ENCODE measurements at regions of chr11 and their contacts with region 1.

Region 1: GRCh38 chr11:111422494-111423249 is 43.6 kb upstream of the POU2AF1 start:
- DNase-seq: peak; percentile 41 to 59 (median 48)
- ATAC-seq: peak; percentile 98
- H3K4me3 ChIP-seq: no peak overlapping the region
- H3K27ac ChIP-seq: no peak overlapping the region
- H3K4me1 ChIP-seq: no peaks in the 10 kb centered on the region
- H3K27me3 ChIP-seq: peaks cover 2 to 9% of the 10 kb centered on the region in 2 experiments; a peak in 3 of 5 replicates
- CTCF ChIP-seq: peak; percentile 80 to 90 (median 82)
- EP300 ChIP-seq: no peak
- POLR2A ChIP-seq: no peak
- RAD21 ChIP-seq: peak; percentile 59 to 78

Region 2: GRCh38 chr11:111283945-111284481 is 138.7 kb before region 1 on chr11:
- CTCF ChIA-PET with region 1: interaction called, 16 read pairs
- POLR2A ChIA-PET with region 1: interaction called, 3 read pairs
- in situ Hi-C with region 1: no loop called
- intact Hi-C with region 1: loop called (anchors 1 kb)
- DNase-seq: no peak
- ATAC-seq: peak; percentile 62
- H3K4me3 ChIP-seq: no peak overlapping the region
- H3K27ac ChIP-seq: no peak overlapping the region
- H3K4me1 ChIP-seq: peaks cover 0 to 3% of the 10 kb centered on the region in 2 experiments; a peak in 1 of 5 replicates
- H3K27me3 ChIP-seq: peaks cover 0 to 20% of the 10 kb centered on the region in 2 experiments; a peak in 3 of 5 replicates
- CTCF ChIP-seq: no peak
- EP300 ChIP-seq: no peak
- POLR2A ChIP-seq: no peak
- RAD21 ChIP-seq: no peak

Region 3: GRCh38 chr11:111344032-111344431 is 78.6 kb before region 1 on chr11:
- CTCF ChIA-PET with region 1: no interaction called
- POLR2A ChIA-PET with region 1: no interaction called
- in situ Hi-C with region 1: no loop called
- intact Hi-C with region 1: no loop called
- DNase-seq: no peak
- ATAC-seq: no peak
- H3K4me3 ChIP-seq: no peak overlapping the region
- H3K27ac ChIP-seq: no peak overlapping the region
- H3K4me1 ChIP-seq: no peaks in the 10 kb centered on the region
- H3K27me3 ChIP-seq: no peaks in the 10 kb centered on the region
- CTCF ChIP-seq: no peak
- EP300 ChIP-seq: no peak
- POLR2A ChIP-seq: no peak
- RAD21 ChIP-seq: no peak

Region 4: GRCh38 chr11:111378861-111379601 is 43.6 kb before region 1 on chr11 and contains the start of gene POU2AF1:
- CTCF ChIA-PET with region 1: no interaction called
- POLR2A ChIA-PET with region 1: no interaction called
- in situ Hi-C with region 1: no loop called
- intact Hi-C with region 1: no loop called
- DNase-seq: no peak
- ATAC-seq: peak; percentile 49; the same call in 2 of the 3 replicates
- H3K4me3 ChIP-seq: no peak within 1 kb of the TSS
- H3K27ac ChIP-seq: no peak within 1 kb of the TSS
- H3K4me1 ChIP-seq: peaks cover 0 to 4% of the 10 kb centered on the region in 2 experiments; a peak in 1 of 5 replicates
- H3K27me3 ChIP-seq: peaks cover 5 to 16% of the 10 kb centered on the region in 2 experiments; a peak in 3 of 5 replicates
- CTCF ChIP-seq: no peak
- EP300 ChIP-seq: no peak
- POLR2A ChIP-seq: no peak
- RAD21 ChIP-seq: no peak
- polyA plus RNA-seq, gene POU2AF1: not detected

Region 5: DNA sequence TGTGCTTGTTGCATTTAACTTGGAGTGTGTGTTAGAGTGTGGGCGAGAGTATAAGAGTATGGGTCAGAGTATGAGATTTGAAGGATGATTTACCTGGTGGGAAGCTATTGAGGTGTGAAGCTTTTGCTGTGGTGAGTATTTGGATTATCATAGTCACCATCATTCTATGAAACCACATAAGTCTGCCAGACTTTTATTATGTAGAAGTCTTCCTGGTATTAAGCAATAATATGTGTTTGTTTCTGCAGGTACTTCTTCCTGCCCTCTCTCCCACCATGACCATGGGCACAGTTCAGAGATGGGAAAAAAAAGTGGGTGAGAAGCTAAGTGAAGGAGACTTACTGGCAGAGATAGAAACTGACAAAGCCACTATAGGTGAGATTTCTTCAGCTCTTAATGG is 610.5 kb after region 1 on chr11:
- CTCF ChIA-PET with region 1: no interaction called
- POLR2A ChIA-PET with region 1: no interaction called
- in situ Hi-C with region 1: no loop called
- intact Hi-C with region 1: no loop called
- DNase-seq: no peak
- ATAC-seq: no peak
- H3K4me3 ChIP-seq: no peak overlapping the region
- H3K27ac ChIP-seq: no peak overlapping the region
- H3K4me1 ChIP-seq: no peaks in the 10 kb centered on the region
- H3K27me3 ChIP-seq: no peaks in the 10 kb centered on the region
- CTCF ChIP-seq: no peak
- EP300 ChIP-seq: no peak
- POLR2A ChIP-seq: no peak
- RAD21 ChIP-seq: no peak